ENCODE measurements at regions of chr3 and their contacts with region 1.

Region 1: GRCh38 chr3:102235679-102236078 is 199.1 kb upstream of the ZPLD1 start:
- DNase-seq: no peak
- H3K4me3 ChIP-seq: no peak overlapping the region
- H3K27ac ChIP-seq: no peak overlapping the region
- H3K4me1 ChIP-seq: peaks cover 11% of the 10 kb centered on the region
- H3K27me3 ChIP-seq: no peaks in the 10 kb centered on the region
- CTCF ChIP-seq: peak; percentile 47; the same call in 1 of the 2 replicates

Region 2: DNA sequence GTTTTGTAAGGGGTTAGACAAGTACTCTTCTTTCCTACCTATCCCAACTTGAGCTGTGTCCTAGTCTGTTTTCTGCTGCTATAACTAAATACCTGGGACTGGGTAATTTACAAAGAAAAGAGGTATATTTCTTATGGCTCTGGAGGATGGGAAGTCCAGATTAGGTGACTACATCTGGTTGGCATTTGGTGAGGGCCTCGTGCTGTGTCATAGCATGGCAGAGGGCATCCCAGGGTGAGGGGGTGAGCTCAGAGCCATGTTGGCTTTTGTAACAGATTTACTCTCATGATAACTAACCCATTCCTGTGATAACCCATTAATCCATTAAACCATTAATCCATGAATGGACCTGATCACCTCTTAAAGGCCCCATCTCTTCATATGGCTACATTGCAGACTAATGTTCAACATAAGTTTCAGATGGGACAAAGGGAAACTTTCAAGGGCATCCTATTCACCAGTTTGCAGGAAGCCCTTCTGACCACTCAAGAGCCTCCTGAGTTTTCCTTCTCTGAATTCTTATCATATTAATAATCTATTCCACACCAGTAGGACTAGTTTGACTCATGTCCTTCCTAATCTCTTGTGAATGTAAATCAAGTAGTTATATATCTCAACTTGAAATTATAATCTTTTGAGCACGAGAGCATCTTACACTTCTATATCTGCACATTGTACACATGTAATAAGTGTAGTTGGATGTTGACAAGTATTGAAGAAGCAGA is 13.5 kb after region 1 on chr3:
- CTCF ChIA-PET with region 1: interaction called, 10 read pairs
- POLR2A ChIA-PET with region 1: no interaction called
- intact Hi-C with region 1: no loop called
- DNase-seq: no peak
- H3K4me3 ChIP-seq: no peak overlapping the region
- H3K27ac ChIP-seq: no peak overlapping the region
- H3K4me1 ChIP-seq: peaks cover 12% of the 10 kb centered on the region; the same call in 1 of the 2 replicates
- H3K27me3 ChIP-seq: no peaks in the 10 kb centered on the region
- CTCF ChIP-seq: no peak

Region 3: DNA sequence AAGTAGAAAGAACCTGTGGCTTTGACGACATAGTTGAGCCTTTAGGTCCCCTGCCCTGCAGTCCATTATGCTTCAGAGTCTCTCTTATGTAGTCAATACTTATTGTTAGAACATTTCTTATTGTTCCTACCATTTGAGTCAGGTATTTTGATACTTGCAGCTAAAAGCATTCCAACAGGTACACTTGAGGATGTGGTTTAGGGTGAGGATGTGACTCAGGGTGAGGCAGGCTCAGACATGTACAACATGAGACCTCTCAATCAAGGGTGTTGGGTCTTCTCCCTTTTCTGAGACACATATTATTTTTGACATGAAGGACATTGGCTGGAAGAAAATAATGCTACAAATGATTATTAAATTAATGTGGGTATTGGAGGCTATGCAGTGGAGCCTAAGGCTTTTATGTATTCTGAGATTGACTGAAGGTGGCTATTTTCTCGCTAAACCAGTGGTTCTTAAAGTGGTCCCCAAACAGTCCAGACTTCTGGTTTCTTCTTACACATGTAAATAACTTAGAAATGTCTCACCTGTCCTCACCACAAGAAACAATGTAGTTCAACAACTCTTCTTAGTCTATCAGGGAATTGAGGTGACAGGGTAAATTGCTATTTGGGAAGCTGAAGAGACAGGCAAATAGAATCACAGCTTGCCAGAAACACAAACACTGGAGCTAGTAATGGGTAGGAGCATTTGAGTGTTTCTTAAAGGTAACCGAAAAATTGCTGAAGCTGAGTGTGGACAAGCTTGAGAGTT is 63.6 kb after region 1 on chr3:
- CTCF ChIA-PET with region 1: no interaction called
- POLR2A ChIA-PET with region 1: no interaction called
- intact Hi-C with region 1: loop called (anchors 5 kb)
- DNase-seq: peak; percentile 54 to 82
- H3K4me3 ChIP-seq: no peak overlapping the region
- H3K27ac ChIP-seq: peak overlapping the region; percentile 85
- H3K4me1 ChIP-seq: peaks cover 40% of the 10 kb centered on the region
- H3K27me3 ChIP-seq: no peaks in the 10 kb centered on the region
- CTCF ChIP-seq: no peak

Region 4: GRCh38 chr3:102536456-102536855 is 300.8 kb after region 1 on chr3:
- CTCF ChIA-PET with region 1: interaction called, 13 read pairs
- POLR2A ChIA-PET with region 1: no interaction called
- intact Hi-C with region 1: loop called (anchors 1 kb)
- DNase-seq: peak in 1 of 2 experiments; percentile 50
- H3K4me3 ChIP-seq: no peak overlapping the region; the same call in 1 of the 2 replicates
- H3K27ac ChIP-seq: no peak overlapping the region
- H3K4me1 ChIP-seq: peaks cover 9% of the 10 kb centered on the region; the same call in 1 of the 2 replicates
- H3K27me3 ChIP-seq: no peaks in the 10 kb centered on the region
- CTCF ChIP-seq: peak; percentile 78

Region 5: GRCh38 chr3:102577091-102577789 is 341.6 kb after region 1 on chr3:
- CTCF ChIA-PET with region 1: interaction called, 12 read pairs
- POLR2A ChIA-PET with region 1: no interaction called
- intact Hi-C with region 1: no loop called
- DNase-seq: no peak
- H3K4me3 ChIP-seq: no peak overlapping the region
- H3K27ac ChIP-seq: no peak overlapping the region
- H3K4me1 ChIP-seq: no peaks in the 10 kb centered on the region
- H3K27me3 ChIP-seq: no peaks in the 10 kb centered on the region
- CTCF ChIP-seq: no peak

Measured in PC-9 (cell line).